Activated CD4-positive, alpha-beta T cell treated with anti-CD3 and anti-CD28 coated beads for 36 hours (primary cell): ENCODE measurements at regions of chr5 and their contacts with region 1.

Region 1: GRCh38 chr5:14581333-14581890 is at the start of gene OTULINL:
- DNase-seq: peak; percentile 93
- ATAC-seq: peak; percentile 94
- H3K4me3 Mint-ChIP-seq: peak within 1 kb of the TSS; percentile 77
- H3K27ac Mint-ChIP-seq: peak within 1 kb of the TSS; percentile 60
- H3K4me1 Mint-ChIP-seq: peaks cover 30% of the 10 kb centered on the region
- H3K27me3 Mint-ChIP-seq: peaks cover 8% of the 10 kb centered on the region
- total RNA-seq, gene OTULINL: 9.4 to 10.9 TPM

Region 2: GRCh38 chr5:14142827-14143548 is 438.4 kb before region 1 on chr5 and contains the start of gene TRIO:
- CTCF ChIA-PET with region 1: no interaction called
- POLR2A ChIA-PET with region 1: no interaction called
- intact Hi-C with region 1: loop called in 1 of 2 experiments (anchors 2 kb)
- DNase-seq: peak; percentile 88
- ATAC-seq: peak; percentile 76
- H3K4me3 Mint-ChIP-seq: peak within 1 kb of the TSS; percentile 75
- H3K27ac Mint-ChIP-seq: peak within 1 kb of the TSS; percentile 78
- H3K4me1 Mint-ChIP-seq: peaks cover 7% of the 10 kb centered on the region
- H3K27me3 Mint-ChIP-seq: peaks cover 38% of the 10 kb centered on the region
- total RNA-seq, gene TRIO: 9.2 to 11.3 TPM

Region 3: GRCh38 chr5:14408969-14409586 is 172.3 kb before region 1 on chr5:
- CTCF ChIA-PET with region 1: interaction called, 4 read pairs
- POLR2A ChIA-PET with region 1: no interaction called
- intact Hi-C with region 1: loop called in 1 of 2 experiments (anchors 5 kb)
- DNase-seq: no peak
- ATAC-seq: no peak
- H3K4me3 Mint-ChIP-seq: no peak overlapping the region
- H3K27ac Mint-ChIP-seq: no peak overlapping the region
- H3K4me1 Mint-ChIP-seq: peaks cover 14% of the 10 kb centered on the region
- H3K27me3 Mint-ChIP-seq: no peaks in the 10 kb centered on the region

Region 4: GRCh38 chr5:14595189-14595588 is 13.8 kb after region 1 on chr5:
- CTCF ChIA-PET with region 1: interaction called, 26 read pairs
- POLR2A ChIA-PET with region 1: interaction called, 8 read pairs
- intact Hi-C with region 1: loop called (anchors 1 kb)
- DNase-seq: peak; percentile 52
- ATAC-seq: peak; percentile 71
- H3K4me3 Mint-ChIP-seq: peak overlapping the region; percentile 66
- H3K27ac Mint-ChIP-seq: peak overlapping the region; percentile 96
- H3K4me1 Mint-ChIP-seq: peaks cover 85% of the 10 kb centered on the region
- H3K27me3 Mint-ChIP-seq: no peaks in the 10 kb centered on the region

Region 5: GRCh38 chr5:16456103-16456832 is 1874.9 kb after region 1 on chr5:
- CTCF ChIA-PET with region 1: no interaction called
- POLR2A ChIA-PET with region 1: no interaction called
- intact Hi-C with region 1: loop called in 1 of 2 experiments (anchors 10 kb)
- DNase-seq: peak; percentile 61
- ATAC-seq: peak; percentile 89
- H3K4me3 Mint-ChIP-seq: peak overlapping the region; percentile 34
- H3K27ac Mint-ChIP-seq: peak overlapping the region; percentile 79
- H3K4me1 Mint-ChIP-seq: peaks cover 52% of the 10 kb centered on the region
- H3K27me3 Mint-ChIP-seq: no peaks in the 10 kb centered on the region